Left lung (tissue), 14 donors: ENCODE measurements at regions of chr1 and their contacts with region 1.

Region 1: GRCh38 chr1:110630839-110631663 is 24.9 kb upstream of the KCNA2 start:
- DNase-seq: peak in 3 of 4 donors; percentile 82 to 90 (median 83)
- ATAC-seq: peak; percentile 94
- H3K4me3 ChIP-seq: no peak overlapping the region
- H3K27ac ChIP-seq: no peak overlapping the region
- H3K4me1 ChIP-seq: peaks cover 6 to 40% of the 10 kb centered on the region in 2 donors
- H3K27me3 ChIP-seq: no peaks in the 10 kb centered on the region
- CTCF ChIP-seq: peak; percentile 74 to 89

Region 2: DNA sequence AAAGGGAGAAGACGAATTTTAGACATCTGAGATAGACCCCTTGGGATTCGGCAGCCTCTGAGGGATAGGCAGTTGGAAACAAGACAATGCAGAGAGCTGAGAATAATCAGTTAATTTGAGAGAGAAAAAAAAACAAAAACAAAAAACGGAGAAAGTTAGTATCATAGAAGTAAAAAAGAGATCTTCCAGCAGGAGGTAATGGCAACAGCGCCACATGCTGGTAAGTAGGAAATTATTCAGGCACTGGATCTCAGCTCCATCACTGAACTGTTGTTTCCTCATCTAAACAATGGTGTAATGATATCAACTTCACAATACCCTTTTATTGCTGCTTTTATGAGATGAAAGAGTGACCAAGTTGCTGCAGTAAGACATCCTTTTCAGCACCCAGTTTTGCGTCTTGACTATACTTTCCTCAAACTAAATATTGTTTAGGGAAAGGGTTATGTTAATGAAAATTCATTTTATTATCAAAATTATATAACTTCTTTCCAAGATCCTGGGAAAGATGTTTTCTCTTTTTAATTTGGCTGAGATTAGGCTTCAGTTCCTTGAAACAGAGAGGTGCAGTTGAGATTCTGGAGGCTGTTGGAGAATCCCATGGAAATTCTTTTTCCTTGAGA is 135.1 kb after region 1 on chr1:
- intact Hi-C with region 1: loop called in 1 of 2 experiments (anchors 2 kb)
- DNase-seq: peak in 2 of 4 donors; percentile 39 to 73
- ATAC-seq: peak; percentile 85
- H3K4me3 ChIP-seq: no peak overlapping the region
- H3K27ac ChIP-seq: no peak overlapping the region
- H3K4me1 ChIP-seq: no peaks in the 10 kb centered on the region
- H3K27me3 ChIP-seq: no peaks in the 10 kb centered on the region
- CTCF ChIP-seq: peak; percentile 75 to 79